Breast epithelium (tissue), 4 donors: ENCODE measurements at regions of chr22 and their contacts with region 1.

Region 1: GRCh38 chr22:20779818-20780158 is 5.9 kb downstream of the SERPIND1 start:
- DNase-seq: no peak
- H3K4me3 ChIP-seq: no peak overlapping the region
- H3K27ac ChIP-seq: no peak overlapping the region
- H3K4me1 ChIP-seq: no peaks in the 10 kb centered on the region
- H3K27me3 ChIP-seq: no peaks in the 10 kb centered on the region
- CTCF ChIP-seq: no peak
- POLR2A ChIP-seq: no peak

Region 2: DNA sequence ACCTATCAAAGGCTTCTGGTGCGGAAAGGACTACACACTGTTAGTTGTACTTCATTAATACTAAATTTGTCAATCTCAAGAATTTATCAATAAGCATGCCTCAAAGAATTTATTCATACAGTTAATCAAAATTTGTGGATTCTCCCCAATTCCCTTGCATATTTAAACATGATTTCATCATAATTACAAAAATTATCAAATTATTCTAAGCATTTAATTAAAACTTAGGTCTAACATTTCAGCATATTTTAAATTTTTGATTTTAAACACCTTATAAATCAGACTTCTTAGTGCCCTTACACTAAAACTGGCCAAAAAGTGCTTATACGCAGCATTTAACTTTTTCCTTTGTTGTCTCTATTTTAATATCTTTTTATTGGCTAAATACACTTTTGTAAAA is 19.7 kb before region 1 on chr22:
- intact Hi-C with region 1: loop called (anchors 1 kb)
- DNase-seq: no peak
- H3K4me3 ChIP-seq: no peak overlapping the region
- H3K27ac ChIP-seq: no peak overlapping the region
- H3K4me1 ChIP-seq: no peaks in the 10 kb centered on the region
- H3K27me3 ChIP-seq: no peaks in the 10 kb centered on the region
- CTCF ChIP-seq: no peak
- POLR2A ChIP-seq: no peak